ENCODE measurements at regions of chr3 and their contacts with region 1.

Region 1: DNA sequence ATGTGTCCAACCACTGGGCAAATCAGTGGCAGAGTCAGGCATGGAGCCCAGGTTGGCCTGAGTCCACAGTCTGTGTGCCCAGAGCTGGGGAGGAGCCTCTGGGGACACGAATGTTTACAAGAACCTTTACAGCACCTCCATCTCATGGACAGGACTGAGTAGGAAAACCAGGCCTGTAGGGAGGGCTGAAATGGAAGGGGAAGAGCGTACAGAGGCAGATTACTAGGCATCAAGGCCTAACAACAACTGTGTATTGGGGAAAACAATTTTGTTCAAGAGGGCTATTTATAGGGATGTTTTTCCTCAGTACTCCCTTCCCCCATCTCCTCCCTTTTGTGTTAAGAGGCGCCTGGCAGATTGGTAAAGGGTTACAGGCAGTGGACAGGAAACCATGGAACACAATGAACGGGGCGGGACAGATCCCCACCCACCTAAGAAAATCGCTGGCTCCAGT is 15.1 kb upstream of the ARHGAP31 start:
- DNase-seq: peak; percentile 85
- ATAC-seq: peak; percentile 91

Region 2: GRCh38 chr3:119331661-119332060 is 52.5 kb after region 1 on chr3:
- intact Hi-C with region 1: loop called (anchors 10 kb)
- DNase-seq: peak; percentile 35
- ATAC-seq: peak; percentile 38

Region 3: DNA sequence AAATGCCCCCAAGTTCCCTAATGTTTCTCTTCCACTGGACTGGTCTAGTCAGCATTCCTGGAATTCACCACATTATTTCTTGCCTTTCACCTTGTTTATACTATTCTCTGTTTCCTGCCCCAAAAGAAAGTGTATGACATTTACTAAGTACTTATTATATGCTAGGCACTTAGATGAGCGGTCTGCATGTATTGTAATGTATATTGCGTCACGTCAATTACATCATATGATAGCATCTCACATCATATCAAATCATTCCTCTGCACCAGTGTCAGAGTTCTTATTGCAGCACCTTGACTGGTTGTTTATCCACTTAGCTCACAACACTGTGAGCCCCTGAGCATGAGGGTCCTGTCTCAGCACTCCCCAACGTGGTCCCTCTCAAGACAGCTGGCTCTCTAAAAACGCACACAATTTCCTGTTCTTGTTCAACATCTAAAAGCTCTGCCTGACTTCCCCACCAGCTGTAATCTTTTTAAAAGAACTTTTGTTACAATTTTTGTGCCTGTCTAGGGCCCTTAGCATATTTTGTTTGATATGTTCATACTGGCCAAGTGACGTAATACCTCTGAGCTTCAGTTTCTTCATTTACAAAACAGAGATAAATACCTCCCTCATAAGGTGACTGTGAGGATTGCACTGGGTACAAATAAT is 73.8 kb after region 1 on chr3:
- intact Hi-C with region 1: loop called (anchors 5 kb)
- DNase-seq: no peak
- ATAC-seq: peak; percentile 67

Region 4: DNA sequence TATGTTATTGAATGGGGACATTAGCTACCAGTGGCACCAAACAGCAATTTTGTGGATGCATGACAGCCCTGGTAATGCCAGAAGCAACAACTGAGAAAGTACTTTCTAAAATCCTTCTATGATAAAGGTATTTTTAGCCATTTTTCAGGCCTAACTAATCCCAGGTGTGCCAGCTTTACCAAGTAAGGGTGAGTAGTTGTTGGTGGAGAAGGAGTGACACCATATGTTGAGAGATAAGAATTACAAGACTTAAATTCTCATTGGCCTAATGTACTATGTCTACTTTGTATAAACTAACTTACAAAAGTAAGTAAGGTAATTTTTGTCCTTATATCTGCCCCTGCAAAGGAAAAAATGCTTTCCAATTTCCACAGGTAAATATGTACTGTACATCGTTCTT is 402.2 kb after region 1 on chr3:
- intact Hi-C with region 1: loop called (anchors 10 kb)
- DNase-seq: no peak
- ATAC-seq: no peak

Measured in left ventricle myocardium superior (tissue), 1 donor.